Aorta (tissue), 5 donors: ENCODE measurements at regions of chr3 and their contacts with region 1.

Region 1: DNA sequence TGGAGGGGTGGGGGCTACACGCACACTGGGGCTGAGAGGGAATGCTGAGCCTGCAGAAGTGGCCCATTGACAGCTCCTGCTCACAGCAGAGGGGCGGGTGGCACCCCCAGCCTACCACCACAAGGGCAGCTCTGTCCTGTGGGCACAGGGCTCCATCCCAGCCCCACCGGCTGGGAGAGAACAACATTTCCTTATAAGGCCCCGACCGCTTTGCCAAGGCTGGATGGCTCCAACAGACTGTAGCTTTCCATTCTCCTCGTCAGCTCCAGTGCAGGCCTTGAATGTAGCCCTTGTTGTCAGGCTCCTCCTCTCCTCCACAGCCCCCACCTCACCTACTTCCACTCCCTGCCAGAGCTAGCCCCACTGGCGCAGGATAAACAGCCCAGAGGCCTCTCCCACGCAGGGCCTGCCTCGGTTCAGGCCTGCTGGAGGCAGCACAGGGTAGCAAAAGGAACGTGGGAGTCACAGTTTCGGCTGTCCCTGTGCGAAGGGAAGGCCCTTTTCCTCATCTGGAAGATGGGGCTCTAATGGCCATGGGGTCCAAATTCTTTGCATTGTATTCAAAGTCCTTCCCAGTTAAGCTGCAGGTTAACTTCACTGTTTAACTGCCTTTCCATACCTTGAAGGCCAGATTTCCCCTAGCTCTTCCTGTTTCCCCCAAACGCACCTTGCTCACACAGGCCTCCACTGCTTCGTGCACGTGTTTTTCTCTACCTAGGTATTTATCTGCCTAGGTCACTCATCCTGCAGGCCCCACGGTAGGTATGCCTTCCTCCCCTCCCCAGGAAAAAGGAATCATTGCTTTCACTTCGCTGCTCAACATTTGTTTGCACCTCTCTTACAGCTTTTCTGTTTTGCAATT is 101.6 kb upstream of the LPP start:
- DNase-seq: peak; percentile 92
- ATAC-seq: peak; percentile 96
- H3K4me3 ChIP-seq: no peak overlapping the region
- H3K27ac ChIP-seq: peak overlapping the region; percentile 72 to 89
- H3K4me1 ChIP-seq: no peaks in the 10 kb centered on the region
- H3K27me3 ChIP-seq: no peaks in the 10 kb centered on the region

Region 2: DNA sequence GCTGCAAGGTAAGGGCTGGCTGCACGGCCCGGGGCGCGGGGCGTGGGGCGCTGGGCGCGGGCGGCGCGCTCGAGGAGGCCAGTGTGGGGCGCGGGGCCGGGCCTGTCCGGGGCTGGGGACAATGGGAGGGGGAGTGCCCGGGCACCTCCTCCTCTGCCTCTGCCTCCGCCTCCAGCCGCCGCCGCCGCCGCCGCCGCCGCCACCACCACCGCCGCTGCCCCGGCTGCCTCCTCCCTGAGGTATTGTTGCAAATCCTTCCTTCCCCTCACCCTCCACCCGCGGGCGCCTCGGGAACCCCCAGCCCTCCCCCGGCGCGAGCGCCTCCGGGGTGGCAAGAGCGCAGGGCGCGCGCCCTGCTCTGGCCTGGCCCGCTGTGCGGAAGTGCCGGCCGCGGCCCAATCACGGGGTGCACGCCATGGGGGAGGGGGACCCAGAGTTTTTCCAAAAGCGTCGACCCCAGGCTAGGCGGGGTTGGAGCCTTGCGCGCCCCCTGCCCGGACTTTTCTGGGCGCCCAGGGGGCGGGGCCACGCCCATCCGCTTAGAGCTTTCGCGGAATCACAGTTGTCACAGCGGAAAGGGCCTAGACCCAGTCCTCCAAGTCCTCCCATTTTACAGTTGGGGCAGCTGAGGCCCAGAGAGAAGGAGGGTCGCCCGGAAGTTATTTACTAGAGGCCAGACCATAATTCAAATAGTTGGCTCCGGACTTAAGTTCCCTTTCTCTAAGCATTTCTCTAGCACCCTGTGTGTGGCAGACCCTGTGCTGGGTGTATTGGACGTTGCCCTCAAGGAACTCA is 101.8 kb after region 1 on chr3 and contains the start of gene LPP:
- intact Hi-C with region 1: loop called (anchors 5 kb)
- DNase-seq: peak; percentile 90 to 92
- ATAC-seq: peak; percentile 88
- H3K4me3 ChIP-seq: peak within 1 kb of the TSS; percentile 29 to 77
- H3K27ac ChIP-seq: peak within 1 kb of the TSS; percentile 98 to 99
- H3K4me1 ChIP-seq: peaks cover 3 to 8% of the 10 kb centered on the region in 2 donors
- H3K27me3 ChIP-seq: no peaks in the 10 kb centered on the region
- total RNA-seq, gene LPP: 995 to 2,536 TPM

Region 3: GRCh38 chr3:188212308-188212969 is 160.0 kb after region 1 on chr3:
- intact Hi-C with region 1: loop called (anchors 5 to 10 kb)
- DNase-seq: peak; percentile 63 to 82
- ATAC-seq: peak; percentile 64
- H3K4me3 ChIP-seq: peak overlapping the region; percentile 79 to 99
- H3K27ac ChIP-seq: peak overlapping the region; percentile 100
- H3K4me1 ChIP-seq: peaks cover 8 to 15% of the 10 kb centered on the region in 2 donors
- H3K27me3 ChIP-seq: no peaks in the 10 kb centered on the region

Region 4: DNA sequence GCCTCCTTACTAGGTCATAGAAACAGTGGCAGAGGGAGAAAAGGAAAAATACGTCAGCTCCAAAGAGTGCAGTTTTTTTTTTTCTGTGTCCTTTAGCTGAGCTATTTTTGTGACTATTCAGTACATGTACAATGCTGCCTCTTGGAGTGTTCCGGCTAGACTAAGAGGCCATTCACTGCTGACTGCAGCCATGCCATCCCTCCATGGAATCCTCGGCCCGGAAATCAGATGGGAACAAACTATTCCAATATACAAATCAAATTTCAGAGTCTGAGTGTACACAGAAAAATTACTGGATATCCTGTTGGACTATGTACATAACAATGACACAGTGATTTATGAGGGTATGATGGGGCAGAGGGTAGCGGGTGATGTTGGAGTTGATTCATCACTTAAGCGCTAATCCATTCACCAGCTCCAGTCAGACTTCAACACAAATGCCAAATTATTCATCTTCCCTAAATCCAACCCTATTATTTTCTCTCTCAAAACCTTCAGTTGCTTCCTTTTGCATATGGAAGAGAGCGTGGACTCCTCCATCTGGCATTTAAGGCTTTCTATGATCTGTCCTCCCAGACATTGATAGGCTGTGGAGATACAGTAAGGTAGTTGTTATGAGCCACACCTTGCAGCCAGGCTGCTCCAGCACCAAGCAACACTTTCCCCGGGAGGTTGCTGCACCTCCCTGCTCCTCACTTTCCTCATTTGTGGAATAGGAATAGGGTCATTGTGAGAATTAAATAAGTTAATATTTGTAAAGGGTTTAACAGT is 210.7 kb after region 1 on chr3:
- intact Hi-C with region 1: loop called in 1 of 2 experiments (anchors 5 kb)
- DNase-seq: peak; percentile 60 to 79
- ATAC-seq: peak; percentile 66
- H3K4me3 ChIP-seq: no peak overlapping the region
- H3K27ac ChIP-seq: peak overlapping the region; percentile 100
- H3K4me1 ChIP-seq: peaks cover 9 to 34% of the 10 kb centered on the region in 2 donors
- H3K27me3 ChIP-seq: no peaks in the 10 kb centered on the region

Region 5: DNA sequence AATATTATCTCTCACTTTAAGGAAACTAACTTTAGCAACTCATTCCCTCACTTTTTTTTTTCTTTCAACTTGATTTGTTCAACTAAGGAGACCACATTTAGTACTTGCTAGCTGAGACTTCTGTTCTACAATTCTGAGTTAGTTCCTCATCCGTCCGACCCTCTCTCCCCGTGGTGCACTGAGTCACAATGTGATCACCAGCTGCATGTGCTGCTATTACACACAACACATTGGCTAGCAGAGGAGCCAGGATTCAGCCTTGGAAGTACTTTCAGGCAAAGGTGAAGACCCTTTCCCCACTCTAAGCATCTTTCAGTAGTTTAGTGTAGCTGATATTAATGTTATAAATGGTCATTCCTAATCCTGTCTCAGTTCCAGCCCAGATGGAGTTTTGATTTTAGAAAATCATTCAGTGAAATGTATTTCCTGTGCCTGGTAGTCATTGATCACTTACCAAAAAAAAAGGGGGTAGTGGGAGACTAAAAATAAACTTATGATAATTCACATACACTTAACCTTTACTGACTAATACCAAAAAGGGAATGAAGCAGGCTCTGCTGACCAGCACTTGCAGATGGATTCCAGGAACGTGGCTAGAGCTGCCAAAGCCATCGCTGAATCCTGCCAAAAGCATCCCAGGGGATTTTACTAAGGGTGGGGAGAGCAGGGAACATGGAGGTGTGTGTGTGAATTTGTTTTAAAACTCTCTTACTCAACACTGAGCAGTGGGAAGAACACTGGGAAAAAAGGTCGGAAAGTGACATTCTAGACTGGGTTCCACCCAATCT is 526.4 kb after region 1 on chr3:
- intact Hi-C with region 1: loop called in 1 of 2 experiments (anchors 5 kb)
- DNase-seq: peak; percentile 77 to 86
- ATAC-seq: peak; percentile 88
- H3K4me3 ChIP-seq: no peak overlapping the region
- H3K27ac ChIP-seq: peak overlapping the region; percentile 79 to 100
- H3K4me1 ChIP-seq: peaks cover 6 to 15% of the 10 kb centered on the region in 2 donors
- H3K27me3 ChIP-seq: no peaks in the 10 kb centered on the region

Region 6: GRCh38 chr3:188947401-188948280 is 895.2 kb after region 1 on chr3:
- intact Hi-C with region 1: loop called (anchors 5 to 10 kb)
- DNase-seq: peak; percentile 94 to 96
- ATAC-seq: peak; percentile 92
- H3K4me3 ChIP-seq: no peak overlapping the region
- H3K27ac ChIP-seq: peak overlapping the region; percentile 94 to 100
- H3K4me1 ChIP-seq: peaks cover 9 to 15% of the 10 kb centered on the region in 2 donors
- H3K27me3 ChIP-seq: no peaks in the 10 kb centered on the region

Region 7: GRCh38 chr3:188954590-188955208 is 902.3 kb after region 1 on chr3:
- intact Hi-C with region 1: loop called (anchors 5 to 10 kb)
- DNase-seq: peak; percentile 87 to 92
- ATAC-seq: peak; percentile 88
- H3K4me3 ChIP-seq: no peak overlapping the region
- H3K27ac ChIP-seq: no peak overlapping the region
- H3K4me1 ChIP-seq: peaks cover 7 to 10% of the 10 kb centered on the region in 2 donors
- H3K27me3 ChIP-seq: no peaks in the 10 kb centered on the region